ENCODE measurements at regions of chr1 and their contacts with region 1.

Region 1: GRCh38 chr1:153352523-153352922 is 3.9 kb upstream of the PGLYRP4 start:
- DNase-seq: peak; percentile 52
- ATAC-seq: peak; percentile 58
- H3K4me3 ChIP-seq: no peak overlapping the region
- H3K27ac ChIP-seq: no peak overlapping the region
- H3K4me1 ChIP-seq: no peaks in the 10 kb centered on the region
- H3K27me3 ChIP-seq: peaks cover 0 to 2% of the 10 kb centered on the region in 2 experiments; a peak in 3 of 5 replicates
- CTCF ChIP-seq: peak; percentile 81
- EP300 ChIP-seq: no peak
- POLR2A ChIP-seq: no peak
- RAD21 ChIP-seq: peak; percentile 55

Region 2: GRCh38 chr1:153324912-153325311 is 27.6 kb before region 1 on chr1:
- CTCF ChIA-PET with region 1: no interaction called
- POLR2A ChIA-PET with region 1: no interaction called
- in situ Hi-C with region 1: no loop called
- intact Hi-C with region 1: no loop called
- DNase-seq: no peak
- ATAC-seq: no peak
- H3K4me3 ChIP-seq: no peak overlapping the region
- H3K27ac ChIP-seq: no peak overlapping the region
- H3K4me1 ChIP-seq: no peaks in the 10 kb centered on the region
- H3K27me3 ChIP-seq: no peaks in the 10 kb centered on the region
- CTCF ChIP-seq: no peak
- EP300 ChIP-seq: no peak
- POLR2A ChIP-seq: no peak
- RAD21 ChIP-seq: no peak

Region 3: GRCh38 chr1:153403421-153404085 is 51.0 kb after region 1 on chr1:
- CTCF ChIA-PET with region 1: no interaction called
- POLR2A ChIA-PET with region 1: no interaction called
- in situ Hi-C with region 1: no loop called
- intact Hi-C with region 1: loop called (anchors 1 kb)
- DNase-seq: no peak
- ATAC-seq: no peak
- H3K4me3 ChIP-seq: no peak overlapping the region
- H3K27ac ChIP-seq: no peak overlapping the region
- H3K4me1 ChIP-seq: no peaks in the 10 kb centered on the region
- H3K27me3 ChIP-seq: peaks cover 1 to 40% of the 10 kb centered on the region in 2 experiments; a peak in 4 of 5 replicates
- CTCF ChIP-seq: no peak
- EP300 ChIP-seq: no peak
- POLR2A ChIP-seq: no peak
- RAD21 ChIP-seq: no peak

Measured in HepG2 (cell line).